ENCODE measurements at regions of chr17 and their contacts with region 1.

Region 1: GRCh38 chr17:3907483-3908216 is 8.6 kb downstream of the P2RX1 start:
- DNase-seq: peak; percentile 36
- ATAC-seq: peak; percentile 67
- H3K4me3 ChIP-seq: no peak overlapping the region
- H3K27ac ChIP-seq: no peak overlapping the region
- H3K4me1 ChIP-seq: peaks cover 16% of the 10 kb centered on the region
- H3K27me3 ChIP-seq: peaks cover 7 to 36% of the 10 kb centered on the region in 2 experiments
- CTCF ChIP-seq: peak; percentile 91
- EP300 ChIP-seq: no peak
- POLR2A ChIP-seq: no peak
- RAD21 ChIP-seq: peak; percentile 74

Region 2: DNA sequence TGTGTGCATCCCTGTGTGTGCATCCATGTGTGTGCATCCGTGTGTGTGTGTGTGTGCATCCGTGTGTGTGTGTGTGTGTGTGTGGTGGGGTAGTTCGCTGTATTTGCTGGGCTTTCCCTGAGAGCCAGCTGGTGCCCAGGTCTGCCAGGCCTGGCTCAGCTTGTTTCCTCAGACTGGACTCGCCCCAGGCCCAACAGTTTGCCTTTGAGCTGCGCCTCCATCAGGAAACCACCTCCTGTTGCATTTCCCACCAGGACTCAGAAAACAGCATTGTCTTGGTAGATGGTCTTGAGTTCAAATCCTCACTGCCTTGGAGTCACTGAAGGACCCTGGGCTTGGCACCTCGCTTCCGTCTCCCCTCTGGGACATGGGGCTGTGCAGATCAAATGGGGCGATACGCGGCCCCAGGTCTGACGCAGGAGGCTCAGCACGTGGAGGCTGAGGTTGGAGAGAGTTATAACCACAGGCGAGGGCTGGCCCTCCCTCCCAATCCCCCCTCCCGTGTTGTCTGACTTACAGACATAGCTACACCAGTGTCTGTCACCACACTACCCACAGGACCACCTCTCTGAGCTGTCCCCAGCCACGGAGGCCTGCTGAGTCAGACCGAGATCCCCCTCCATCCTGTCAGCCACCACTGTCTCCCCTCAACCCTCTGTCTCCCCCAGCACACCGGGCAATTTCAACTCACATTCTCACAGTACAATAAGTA is 111.4 kb before region 1 on chr17:
- CTCF ChIA-PET with region 1: no interaction called
- POLR2A ChIA-PET with region 1: no interaction called
- in situ Hi-C with region 1: no loop called
- intact Hi-C with region 1: no loop called
- DNase-seq: no peak
- ATAC-seq: no peak
- H3K4me3 ChIP-seq: no peak overlapping the region
- H3K27ac ChIP-seq: peak overlapping the region; percentile 92
- H3K4me1 ChIP-seq: peaks cover 71% of the 10 kb centered on the region
- H3K27me3 ChIP-seq: no peaks in the 10 kb centered on the region
- CTCF ChIP-seq: no peak
- EP300 ChIP-seq: no peak
- POLR2A ChIP-seq: no peak
- RAD21 ChIP-seq: no peak

Region 3: GRCh38 chr17:3845621-3846441 is 61.8 kb before region 1 on chr17 and contains the start of gene NCBP3:
- CTCF ChIA-PET with region 1: interaction called, 3 read pairs
- POLR2A ChIA-PET with region 1: interaction called, 12 read pairs
- in situ Hi-C with region 1: no loop called
- intact Hi-C with region 1: loop called (anchors 5 kb)
- DNase-seq: peak; percentile 81
- ATAC-seq: peak; percentile 98
- H3K4me3 ChIP-seq: peak within 1 kb of the TSS; percentile 97 to 98 (median 98)
- H3K27ac ChIP-seq: peak within 1 kb of the TSS; percentile 80
- H3K4me1 ChIP-seq: peaks cover 49% of the 10 kb centered on the region
- H3K27me3 ChIP-seq: no peaks in the 10 kb centered on the region; a peak in 1 of 5 replicates
- CTCF ChIP-seq: peak; percentile 96
- EP300 ChIP-seq: peak in 1 of 2 experiments; percentile 26; a peak in 2 of 4 replicates
- POLR2A ChIP-seq: peak; percentile 85 to 86
- RAD21 ChIP-seq: peak; percentile 73
- total RNA-seq, gene NCBP3: 20.6 and 24.8 TPM in 2 replicates

Region 4: DNA sequence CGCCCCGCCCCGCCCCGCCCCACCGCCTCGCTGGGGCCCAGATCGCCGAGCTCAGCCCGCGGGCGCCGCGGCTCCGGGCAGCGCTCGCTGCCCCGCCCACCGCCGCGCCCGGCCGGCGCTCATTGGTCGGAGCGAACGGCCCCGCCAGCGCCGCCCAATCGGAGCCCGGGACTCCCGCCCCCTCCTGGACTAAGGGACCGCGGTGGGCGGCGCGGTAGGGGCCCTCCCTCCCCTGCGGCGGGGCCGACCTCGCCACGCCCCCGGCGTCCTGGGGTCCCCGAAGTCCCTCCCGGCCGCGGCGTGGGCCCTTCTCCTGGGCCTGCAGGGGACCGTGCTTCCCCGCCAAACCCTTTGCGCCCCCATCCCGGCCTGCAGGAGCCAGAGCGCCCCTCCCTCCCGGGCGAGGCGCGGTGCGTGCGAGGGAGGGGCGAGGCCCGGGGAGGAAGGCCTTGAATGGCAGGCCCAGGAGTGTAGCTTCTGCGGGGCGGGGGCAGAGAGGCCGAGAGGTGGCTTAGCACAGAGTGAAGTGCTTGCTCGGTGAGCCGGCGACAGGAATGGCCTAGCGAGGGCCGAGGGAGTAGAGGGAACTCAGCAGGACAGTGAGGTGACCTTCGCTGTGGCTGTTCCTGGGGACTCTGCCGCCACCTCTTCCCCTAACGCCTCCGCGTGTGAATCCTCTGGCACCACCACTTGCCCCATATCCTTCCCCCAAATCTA is 14.5 kb before region 1 on chr17 and contains the start of gene CAMKK1:
- CTCF ChIA-PET with region 1: no interaction called
- POLR2A ChIA-PET with region 1: interaction called, 47 read pairs
- in situ Hi-C with region 1: no loop called
- intact Hi-C with region 1: no loop called
- DNase-seq: peak; percentile 77
- ATAC-seq: peak; percentile 85
- H3K4me3 ChIP-seq: peak within 1 kb of the TSS; percentile 66 to 82 (median 75)
- H3K27ac ChIP-seq: peak within 1 kb of the TSS; percentile 52
- H3K4me1 ChIP-seq: peaks cover 35% of the 10 kb centered on the region
- H3K27me3 ChIP-seq: peaks cover 0 to 16% of the 10 kb centered on the region in 2 experiments; a peak in 2 of 5 replicates
- CTCF ChIP-seq: 0 out of 2 replicates have a peak, but pooled peaks have one; percentile 18
- EP300 ChIP-seq: no peak
- POLR2A ChIP-seq: no peak; a peak in 1 of 4 replicates
- RAD21 ChIP-seq: peak; percentile 65
- total RNA-seq, gene CAMKK1: 0.83 and 1.5 TPM in 2 replicates

Measured in HepG2 (cell line).